ENCODE measurements at regions of chr7 and their contacts with region 1.

Region 1: DNA sequence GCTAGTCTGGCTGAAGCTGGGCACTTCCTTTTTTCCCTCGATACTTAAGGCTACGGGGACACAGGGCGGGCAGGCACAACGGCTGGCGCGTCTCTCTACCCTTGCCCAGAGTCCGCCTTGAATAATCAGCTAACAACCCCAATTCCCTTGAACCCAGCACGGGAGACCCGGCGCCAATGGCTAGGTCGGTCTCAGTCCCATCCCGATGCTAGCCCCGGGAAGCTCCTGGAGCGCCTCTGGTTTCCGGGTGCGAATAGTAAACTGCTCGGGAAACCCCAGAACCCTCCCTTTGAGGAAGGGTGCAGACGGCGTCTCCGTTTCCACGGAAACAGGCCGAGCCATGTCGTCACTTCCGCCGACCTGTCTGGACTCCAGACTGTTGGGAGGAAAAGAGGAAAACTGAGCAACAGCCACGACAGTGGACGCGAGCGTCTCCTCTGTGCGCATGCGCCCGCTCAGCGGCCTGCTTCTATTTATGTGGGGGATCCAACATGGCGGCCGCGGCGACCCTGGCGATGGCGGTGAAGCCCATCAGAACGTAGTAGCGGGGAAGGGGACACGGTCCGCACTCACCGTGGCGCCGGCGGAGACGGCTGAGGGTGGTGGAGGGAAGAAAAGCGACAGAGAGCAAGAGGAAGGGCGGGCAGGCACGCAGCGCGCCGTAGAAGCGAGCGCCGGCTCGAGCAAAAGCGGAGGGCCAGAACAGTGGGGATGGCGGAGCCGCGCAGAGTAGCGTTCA is at the start of gene UBN2:
- DNase-seq: peak; percentile 97
- H3K4me3 Mint-ChIP-seq: peak within 1 kb of the TSS; percentile 97
- H3K27ac Mint-ChIP-seq: peak within 1 kb of the TSS; percentile 90
- H3K4me1 Mint-ChIP-seq: peaks cover 27% of the 10 kb centered on the region
- H3K27me3 Mint-ChIP-seq: peaks cover 5% of the 10 kb centered on the region
- total RNA-seq, gene UBN2: 11.3 to 13.3 TPM

Region 2: GRCh38 chr7:139016931-139017511 is 213.9 kb before region 1 on chr7:
- CTCF ChIA-PET with region 1: interaction called, 5 read pairs
- POLR2A ChIA-PET with region 1: no interaction called
- intact Hi-C with region 1: loop called (anchors 2 kb)
- DNase-seq: peak; percentile 67
- H3K4me3 Mint-ChIP-seq: no peak overlapping the region
- H3K27ac Mint-ChIP-seq: no peak overlapping the region
- H3K4me1 Mint-ChIP-seq: no peaks in the 10 kb centered on the region
- H3K27me3 Mint-ChIP-seq: peaks cover 2% of the 10 kb centered on the region

Region 3: GRCh38 chr7:139109188-139109982 is 121.6 kb before region 1 on chr7 and contains the start of gene ZC3HAV1:
- CTCF ChIA-PET with region 1: no interaction called
- POLR2A ChIA-PET with region 1: no interaction called
- intact Hi-C with region 1: loop called (anchors 2 kb)
- DNase-seq: peak; percentile 92
- H3K4me3 Mint-ChIP-seq: peak within 1 kb of the TSS; percentile 98
- H3K27ac Mint-ChIP-seq: peak within 1 kb of the TSS; percentile 98
- H3K4me1 Mint-ChIP-seq: peaks cover 28% of the 10 kb centered on the region
- H3K27me3 Mint-ChIP-seq: no peaks in the 10 kb centered on the region
- total RNA-seq, gene ZC3HAV1: 99.3 to 99.6 TPM

Region 4: GRCh38 chr7:139203992-139204391 is 27.0 kb before region 1 on chr7:
- CTCF ChIA-PET with region 1: no interaction called
- POLR2A ChIA-PET with region 1: no interaction called
- intact Hi-C with region 1: no loop called
- DNase-seq: no peak
- H3K4me3 Mint-ChIP-seq: no peak overlapping the region
- H3K27ac Mint-ChIP-seq: no peak overlapping the region
- H3K4me1 Mint-ChIP-seq: no peaks in the 10 kb centered on the region
- H3K27me3 Mint-ChIP-seq: peaks cover 9% of the 10 kb centered on the region

Region 5: DNA sequence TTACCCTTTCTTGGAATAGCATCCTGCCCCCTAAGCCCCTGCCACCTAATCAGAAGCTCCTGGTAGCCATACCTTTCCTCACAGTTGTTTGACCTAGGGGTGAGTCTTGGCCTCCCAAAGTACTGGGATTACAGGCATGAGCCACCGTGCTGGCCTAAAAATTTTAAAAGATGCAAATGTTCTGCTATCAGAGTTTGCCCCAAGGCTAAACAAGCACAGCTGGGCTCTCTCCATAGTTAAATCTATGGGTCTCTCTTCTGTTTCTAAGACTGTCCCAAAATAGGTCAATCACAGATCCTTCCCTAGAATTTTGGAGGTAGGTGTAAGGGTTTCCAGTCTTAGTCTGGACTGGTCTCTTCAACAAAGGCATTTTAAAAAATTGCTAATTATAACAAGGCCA is 12.8 kb before region 1 on chr7:
- CTCF ChIA-PET with region 1: no interaction called
- POLR2A ChIA-PET with region 1: no interaction called
- intact Hi-C with region 1: no loop called
- DNase-seq: no peak
- H3K4me3 Mint-ChIP-seq: no peak overlapping the region
- H3K27ac Mint-ChIP-seq: no peak overlapping the region
- H3K4me1 Mint-ChIP-seq: no peaks in the 10 kb centered on the region
- H3K27me3 Mint-ChIP-seq: no peaks in the 10 kb centered on the region

Region 6: GRCh38 chr7:139242741-139243281 is 11.9 kb after region 1 on chr7:
- CTCF ChIA-PET with region 1: no interaction called
- POLR2A ChIA-PET with region 1: interaction called, 17 read pairs
- intact Hi-C with region 1: no loop called
- DNase-seq: no peak
- H3K4me3 Mint-ChIP-seq: no peak overlapping the region
- H3K27ac Mint-ChIP-seq: no peak overlapping the region
- H3K4me1 Mint-ChIP-seq: peaks cover 6% of the 10 kb centered on the region
- H3K27me3 Mint-ChIP-seq: no peaks in the 10 kb centered on the region

Region 7: GRCh38 chr7:139359366-139360209 is 128.6 kb after region 1 on chr7 and contains the start of gene LUC7L2:
- CTCF ChIA-PET with region 1: no interaction called
- POLR2A ChIA-PET with region 1: interaction called, 4 read pairs
- intact Hi-C with region 1: loop called (anchors 1 kb)
- DNase-seq: peak; percentile 100
- H3K4me3 Mint-ChIP-seq: peak within 1 kb of the TSS; percentile 97
- H3K27ac Mint-ChIP-seq: peak within 1 kb of the TSS; percentile 99
- H3K4me1 Mint-ChIP-seq: peaks cover 40% of the 10 kb centered on the region
- H3K27me3 Mint-ChIP-seq: no peaks in the 10 kb centered on the region
- total RNA-seq, gene LUC7L2: 105 to 114 TPM